AG04449 (cell line): ENCODE measurements at regions of chr4 and their contacts with region 1.

Region 1: DNA sequence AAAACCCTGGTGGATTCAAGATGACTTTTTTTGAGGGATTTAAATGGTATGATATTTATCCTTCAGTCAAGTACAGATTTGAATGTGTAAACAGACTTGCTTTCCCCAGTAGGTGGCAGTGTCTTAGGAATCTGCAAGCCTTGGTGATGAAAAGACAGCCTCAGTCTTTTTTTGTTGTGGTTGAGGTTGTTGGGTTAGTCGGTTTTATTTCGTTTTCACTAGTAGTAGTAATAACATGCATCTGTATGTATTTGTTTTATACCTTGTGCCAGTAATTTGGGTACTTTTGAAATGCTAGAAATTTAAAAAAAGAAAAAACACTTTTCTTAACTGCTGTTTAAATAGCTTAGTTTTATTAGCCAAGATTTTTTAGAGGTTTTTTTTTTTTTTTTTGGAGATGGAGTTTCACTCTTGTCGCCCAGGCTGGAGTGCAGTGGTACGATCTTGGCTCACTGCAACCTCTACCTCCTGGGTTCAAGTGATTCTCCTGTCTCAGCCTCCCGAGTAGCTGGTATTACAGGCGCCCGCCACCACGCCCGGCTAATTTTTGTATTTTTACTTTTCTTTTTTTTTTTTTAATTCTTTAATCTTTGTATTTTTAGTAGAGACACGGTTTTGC is 39.2 kb downstream of the COPS4 start:
- DNase-seq: peak; percentile 45
- H3K4me3 ChIP-seq: no peak overlapping the region
- CTCF ChIP-seq: peak; percentile 64

Region 2: DNA sequence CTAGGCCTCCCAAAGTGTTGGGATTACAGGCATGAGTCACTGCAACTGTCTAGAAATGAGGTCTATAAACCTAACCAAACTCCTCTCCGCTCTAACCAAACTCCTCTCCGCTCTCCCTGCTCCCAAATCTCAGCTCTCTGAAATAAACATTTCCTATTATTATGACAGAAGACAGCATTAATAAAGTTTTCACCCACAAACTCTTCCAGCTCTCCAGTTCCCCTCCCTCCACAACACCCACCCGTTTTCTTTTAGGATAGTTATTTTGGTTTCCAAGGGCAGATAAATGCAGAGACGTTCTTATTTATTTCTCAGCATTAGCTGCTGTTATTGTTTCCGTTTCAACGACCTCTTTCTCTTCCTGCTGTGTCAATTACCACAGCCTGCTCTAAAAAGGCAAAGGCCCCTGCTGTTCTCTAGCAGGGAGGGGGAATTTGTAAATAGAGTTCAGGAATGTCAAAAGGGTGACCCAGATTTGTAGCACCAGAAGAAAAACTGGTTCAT is 262.3 kb before region 1 on chr4:
- CTCF ChIA-PET with region 1: no interaction called
- POLR2A ChIA-PET with region 1: no interaction called
- DNase-seq: no peak
- H3K4me3 ChIP-seq: no peak overlapping the region
- CTCF ChIP-seq: no peak

Region 3: DNA sequence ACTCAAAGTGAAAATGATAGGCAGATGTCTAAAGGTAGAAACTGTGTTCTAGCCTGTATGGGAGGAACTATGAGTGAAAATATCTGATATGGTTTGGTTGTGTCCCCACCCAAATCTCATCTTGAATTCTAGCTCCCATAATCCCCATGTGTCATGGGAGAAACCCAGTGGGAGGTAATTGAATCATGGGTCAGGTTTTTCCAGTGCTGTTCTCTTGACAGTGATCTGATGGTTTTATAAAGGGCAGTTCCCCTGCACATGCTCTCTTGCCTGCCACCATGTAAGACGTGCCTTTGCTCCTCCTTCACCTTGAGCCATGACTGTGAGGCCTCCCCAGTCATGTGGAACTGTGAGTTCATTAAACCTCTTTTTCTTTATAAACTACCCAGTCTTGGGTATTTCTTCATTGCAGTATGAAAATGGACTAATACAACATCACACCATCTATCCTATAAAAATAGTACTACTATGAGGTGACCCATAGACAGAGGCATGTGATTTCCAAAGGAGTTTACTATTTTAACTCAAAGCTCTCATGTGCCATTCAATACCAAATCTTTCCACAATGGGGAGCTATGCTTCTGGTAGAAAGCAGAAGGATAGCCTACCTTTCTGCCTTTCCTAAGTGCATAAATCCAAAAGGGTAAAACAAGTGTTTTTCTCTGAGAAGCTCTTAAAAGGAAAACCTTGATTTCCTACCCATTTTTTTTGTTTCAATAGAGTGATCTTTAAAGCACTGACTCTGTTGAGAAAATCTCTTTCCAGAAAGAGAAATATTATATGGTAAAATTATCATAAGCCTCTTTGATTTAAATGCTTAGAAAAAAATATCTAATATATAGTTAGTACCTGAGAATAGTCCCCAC is 222.1 kb before region 1 on chr4:
- CTCF ChIA-PET with region 1: no interaction called
- POLR2A ChIA-PET with region 1: no interaction called
- DNase-seq: no peak
- H3K4me3 ChIP-seq: no peak overlapping the region
- CTCF ChIP-seq: peak; percentile 15

Region 4: DNA sequence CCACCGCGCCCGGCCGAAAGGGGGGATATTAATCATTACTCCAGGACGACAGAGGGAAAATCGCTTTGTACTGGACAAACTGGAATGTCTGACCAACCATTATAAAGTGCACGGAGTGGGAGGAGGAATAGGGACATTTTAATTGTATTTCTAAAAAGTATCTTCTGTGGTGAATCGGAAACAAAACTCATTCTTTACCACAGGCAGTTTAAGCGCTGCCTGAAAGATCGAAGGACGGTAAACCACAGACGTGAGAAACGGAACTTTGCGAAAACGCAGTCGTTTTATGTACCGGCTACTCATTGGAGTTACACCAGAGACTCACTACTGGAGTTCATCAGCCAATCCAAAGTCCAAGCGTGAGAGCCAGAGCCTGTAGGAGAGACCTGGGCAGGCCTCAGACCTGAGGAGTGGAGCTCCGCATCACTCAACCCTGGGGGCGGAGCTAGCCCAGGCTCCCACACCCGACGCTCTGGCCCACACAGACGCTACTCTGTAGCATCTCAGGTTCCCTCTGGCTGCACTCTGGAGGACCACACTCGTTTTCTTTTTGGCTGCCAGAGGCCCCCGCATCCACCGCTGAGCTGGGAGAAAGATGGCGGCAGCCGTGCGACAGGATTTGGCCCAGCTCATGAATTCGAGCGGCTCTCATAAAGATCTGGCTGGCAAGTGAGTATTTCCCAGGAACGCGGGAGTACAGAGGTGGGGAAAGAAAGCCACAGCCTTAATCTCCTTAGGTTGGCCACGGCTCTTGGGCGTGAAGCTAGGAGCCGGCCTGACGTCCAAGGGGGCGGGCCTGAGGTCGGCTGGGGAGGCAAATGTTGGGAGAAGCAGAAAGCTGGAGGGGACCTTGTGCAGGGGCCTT is 39.3 kb before region 1 on chr4 and contains the start of gene COPS4:
- CTCF ChIA-PET with region 1: interaction called, 10 read pairs
- POLR2A ChIA-PET with region 1: no interaction called
- DNase-seq: peak; percentile 99
- H3K4me3 ChIP-seq: peak within 1 kb of the TSS; percentile 92
- CTCF ChIP-seq: peak; percentile 45

Region 5: GRCh38 chr4:83062739-83063138 is 11.5 kb before region 1 on chr4:
- CTCF ChIA-PET with region 1: interaction called, 21 read pairs
- POLR2A ChIA-PET with region 1: no interaction called
- DNase-seq: no peak
- H3K4me3 ChIP-seq: no peak overlapping the region
- CTCF ChIP-seq: no peak

Region 6: GRCh38 chr4:83110223-83110945 is 36.2 kb after region 1 on chr4:
- CTCF ChIA-PET with region 1: interaction called, 42 read pairs
- POLR2A ChIA-PET with region 1: interaction called, 4 read pairs
- DNase-seq: no peak
- H3K4me3 ChIP-seq: peak overlapping the region; percentile 55
- CTCF ChIP-seq: peak; percentile 89

Region 7: DNA sequence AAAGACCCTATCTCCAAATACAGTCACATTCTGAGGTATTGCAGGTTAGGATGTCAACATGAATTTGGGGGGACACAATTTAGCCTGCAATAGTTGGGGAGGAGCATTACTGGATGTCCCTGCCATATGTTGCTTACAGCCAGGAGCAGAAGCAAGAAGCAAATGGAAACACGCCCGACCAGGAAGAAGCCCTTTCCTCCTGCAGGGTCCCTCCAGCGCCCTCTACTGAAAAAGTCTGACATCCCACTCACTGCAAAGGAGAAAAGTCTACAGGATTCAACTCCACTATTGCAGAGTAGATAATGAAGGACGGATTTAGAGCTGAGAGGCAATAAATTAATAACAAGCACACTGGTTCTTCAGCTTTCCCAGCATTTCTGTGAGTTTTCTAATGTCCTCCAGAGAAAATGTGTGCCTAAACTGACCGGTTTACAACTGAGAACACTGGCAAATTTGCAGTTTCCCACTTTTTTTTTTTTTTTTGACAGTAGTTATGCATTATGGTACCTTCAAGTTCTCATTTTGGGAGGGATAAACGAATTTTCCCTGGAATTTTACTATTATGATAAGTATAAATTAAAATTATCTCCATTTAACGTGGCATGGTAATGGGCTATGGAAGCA is 178.7 kb after region 1 on chr4:
- CTCF ChIA-PET with region 1: interaction called, 11 read pairs
- POLR2A ChIA-PET with region 1: no interaction called
- DNase-seq: no peak
- H3K4me3 ChIP-seq: no peak overlapping the region
- CTCF ChIP-seq: peak; percentile 59

Region 8: GRCh38 chr4:83267121-83267829 is 193.1 kb after region 1 on chr4:
- CTCF ChIA-PET with region 1: interaction called, 183 read pairs
- POLR2A ChIA-PET with region 1: no interaction called
- DNase-seq: no peak
- H3K4me3 ChIP-seq: no peak overlapping the region
- CTCF ChIP-seq: no peak

Region 9: GRCh38 chr4:83272900-83273299 is 198.7 kb after region 1 on chr4:
- CTCF ChIA-PET with region 1: interaction called, 183 read pairs
- POLR2A ChIA-PET with region 1: no interaction called
- DNase-seq: no peak
- H3K4me3 ChIP-seq: no peak overlapping the region
- CTCF ChIP-seq: no peak